ENCODE measurements at regions of chr19 and their contacts with region 1.

Region 1: DNA sequence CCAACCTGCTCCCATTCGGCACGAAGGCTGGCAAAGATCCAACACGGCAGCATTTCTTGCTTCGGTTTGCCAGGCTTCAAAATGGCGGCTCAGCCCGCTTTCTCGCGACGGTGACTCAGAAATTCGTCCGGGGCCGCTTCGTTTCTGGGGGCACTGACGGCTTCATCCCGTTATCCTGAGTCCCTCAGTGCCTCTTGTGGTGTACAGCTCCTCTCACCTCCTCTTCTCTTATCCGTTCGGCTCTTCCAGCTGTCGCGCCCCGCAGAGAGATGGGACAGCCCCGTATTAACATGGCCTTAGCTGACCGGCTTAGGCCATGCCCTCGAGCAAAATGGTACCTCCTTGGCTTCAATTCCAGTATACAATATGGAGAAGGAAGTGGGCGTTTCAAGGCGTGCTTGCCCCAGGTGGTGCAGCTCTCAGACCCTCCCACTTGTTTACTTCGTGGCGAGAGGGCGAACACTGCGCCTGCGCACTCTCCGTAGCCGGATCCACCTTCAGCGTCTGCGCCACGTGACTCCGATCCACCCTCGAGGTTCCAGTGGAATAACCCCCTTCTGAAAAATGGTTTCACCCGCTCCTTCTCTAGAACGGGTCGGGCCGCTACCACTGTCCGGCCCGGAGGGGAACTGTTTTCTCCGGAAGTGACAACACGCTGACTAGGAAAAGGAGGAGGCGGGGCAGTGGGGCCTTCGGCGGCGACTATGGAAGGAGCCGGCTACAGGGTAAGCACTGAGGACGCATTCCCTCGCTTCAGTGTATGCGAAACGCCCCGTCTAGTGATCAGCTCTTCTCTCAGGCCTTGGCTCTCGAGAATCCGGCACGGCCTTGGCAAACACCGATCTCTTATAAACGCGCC is at the starts of genes AKT1S1 and TBC1D17:
- DNase-seq: peak; percentile 100
- H3K4me3 ChIP-seq: peak within 1 kb of the TSS; percentile 61 to 100 (median 91)
- H3K27ac ChIP-seq: peak within 1 kb of the TSS; percentile 92 to 100 (median 96)
- H3K4me1 ChIP-seq: peaks cover 0 to 33% (median 29%) of the 10 kb centered on the region in 4 donors
- H3K27me3 ChIP-seq: no peaks in the 10 kb centered on the region
- CTCF ChIP-seq: no peak
- EP300 ChIP-seq: peak in 2 of 4 donors; percentile 27 to 61
- POLR2A ChIP-seq: peak; percentile 76 to 92
- total RNA-seq, gene AKT1S1: 13.6 to 16.1 (median 14.6) TPM
- total RNA-seq, gene TBC1D17: 25.0 to 41.0 (median 26.6) TPM

Region 2: GRCh38 chr19:49451430-49452181 is 425.6 kb before region 1 on chr19 and contains the start of gene PIH1D1:
- intact Hi-C with region 1: loop called (anchors 5 kb)
- DNase-seq: peak; percentile 99
- H3K4me3 ChIP-seq: peak within 1 kb of the TSS; percentile 54 to 71 (median 60)
- H3K27ac ChIP-seq: peak within 1 kb of the TSS; percentile 96 to 99 (median 97)
- H3K4me1 ChIP-seq: peaks cover 0 to 46% (median 17%) of the 10 kb centered on the region in 4 donors
- H3K27me3 ChIP-seq: no peaks in the 10 kb centered on the region
- CTCF ChIP-seq: no peak
- EP300 ChIP-seq: peak in 1 of 4 donors; percentile 27
- POLR2A ChIP-seq: no peak
- total RNA-seq, gene PIH1D1: 62.9 to 99.6 (median 81.4) TPM

Region 3: GRCh38 chr19:49497047-49497788 is 380.0 kb before region 1 on chr19:
- intact Hi-C with region 1: loop called (anchors 5 kb)
- DNase-seq: peak; percentile 81
- H3K4me3 ChIP-seq: peak overlapping the region; percentile 70 to 95 (median 85)
- H3K27ac ChIP-seq: peak overlapping the region; percentile 88 to 96 (median 94)
- H3K4me1 ChIP-seq: peaks cover 0 to 46% (median 34%) of the 10 kb centered on the region in 4 donors
- H3K27me3 ChIP-seq: no peaks in the 10 kb centered on the region
- CTCF ChIP-seq: no peak
- EP300 ChIP-seq: no peak
- POLR2A ChIP-seq: no peak

Region 4: GRCh38 chr19:49676690-49677231 is 200.5 kb before region 1 on chr19:
- intact Hi-C with region 1: loop called (anchors 2 kb)
- DNase-seq: peak; percentile 100
- H3K4me3 ChIP-seq: peak overlapping the region; percentile 71 to 96 (median 94)
- H3K27ac ChIP-seq: peak overlapping the region; percentile 92 to 95 (median 94)
- H3K4me1 ChIP-seq: peaks cover 0 to 54% (median 51%) of the 10 kb centered on the region in 4 donors
- H3K27me3 ChIP-seq: no peaks in the 10 kb centered on the region
- CTCF ChIP-seq: no peak
- EP300 ChIP-seq: no peak
- POLR2A ChIP-seq: no peak

Region 5: GRCh38 chr19:49755956-49756355 is 121.3 kb before region 1 on chr19:
- intact Hi-C with region 1: no loop called
- DNase-seq: no peak
- H3K4me3 ChIP-seq: no peak overlapping the region
- H3K27ac ChIP-seq: no peak overlapping the region
- H3K4me1 ChIP-seq: no peaks in the 10 kb centered on the region
- H3K27me3 ChIP-seq: no peaks in the 10 kb centered on the region
- CTCF ChIP-seq: no peak
- EP300 ChIP-seq: no peak
- POLR2A ChIP-seq: no peak

Region 6: GRCh38 chr19:49766007-49766937 is 111.0 kb before region 1 on chr19:
- intact Hi-C with region 1: loop called (anchors 2 kb)
- DNase-seq: peak; percentile 100
- H3K4me3 ChIP-seq: peak overlapping the region; percentile 14 to 96 (median 92)
- H3K27ac ChIP-seq: peak overlapping the region; percentile 91 to 96 (median 92)
- H3K4me1 ChIP-seq: peaks cover 0 to 36% (median 27%) of the 10 kb centered on the region in 4 donors
- H3K27me3 ChIP-seq: no peaks in the 10 kb centered on the region
- CTCF ChIP-seq: no peak
- EP300 ChIP-seq: no peak
- POLR2A ChIP-seq: peak; percentile 36 to 39

Region 7: DNA sequence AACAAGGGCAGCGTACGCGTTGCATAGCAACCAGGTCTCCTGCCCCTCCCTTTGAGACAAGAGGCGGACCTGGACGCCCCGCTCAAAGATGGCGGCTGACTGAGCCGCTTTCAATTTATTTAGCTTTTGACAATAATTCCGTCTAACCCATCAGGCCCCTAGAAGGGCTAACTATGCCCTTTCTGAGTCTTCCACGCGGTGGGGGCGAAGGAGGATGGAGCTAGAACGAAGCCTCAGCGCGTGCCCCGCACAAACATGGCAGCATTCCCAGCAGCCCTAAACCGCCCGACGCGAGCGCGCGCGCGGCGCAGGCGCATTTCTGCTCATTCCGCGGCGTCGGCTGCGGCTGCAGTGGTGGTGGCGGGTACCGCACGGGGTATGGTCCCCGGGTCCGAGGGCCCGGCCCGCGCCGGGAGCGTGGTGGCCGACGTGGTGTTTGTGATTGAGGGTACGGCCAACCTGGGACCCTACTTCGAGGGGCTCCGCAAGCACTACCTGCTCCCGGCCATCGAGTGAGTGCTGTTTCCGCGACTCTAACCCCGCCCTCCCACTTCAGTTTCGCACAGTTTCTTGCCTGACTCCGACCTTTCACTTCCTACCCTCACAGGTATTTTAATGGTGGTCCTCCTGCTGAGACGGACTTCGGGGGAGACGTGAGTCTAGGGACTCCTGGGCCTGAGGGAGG is 59.1 kb before region 1 on chr19 and contains the start of gene MED25:
- intact Hi-C with region 1: loop called (anchors 1 kb)
- DNase-seq: peak; percentile 91
- H3K4me3 ChIP-seq: peak within 1 kb of the TSS; percentile 77 to 94 (median 82)
- H3K27ac ChIP-seq: peak within 1 kb of the TSS; percentile 96 to 98 (median 96)
- H3K4me1 ChIP-seq: peaks cover 0 to 35% (median 30%) of the 10 kb centered on the region in 4 donors
- H3K27me3 ChIP-seq: no peaks in the 10 kb centered on the region
- CTCF ChIP-seq: peak; percentile 34 to 73 (median 51)
- EP300 ChIP-seq: no peak
- POLR2A ChIP-seq: peak; percentile 68 to 76
- total RNA-seq, gene MED25: 17.8 to 45.4 (median 22.4) TPM

Region 8: DNA sequence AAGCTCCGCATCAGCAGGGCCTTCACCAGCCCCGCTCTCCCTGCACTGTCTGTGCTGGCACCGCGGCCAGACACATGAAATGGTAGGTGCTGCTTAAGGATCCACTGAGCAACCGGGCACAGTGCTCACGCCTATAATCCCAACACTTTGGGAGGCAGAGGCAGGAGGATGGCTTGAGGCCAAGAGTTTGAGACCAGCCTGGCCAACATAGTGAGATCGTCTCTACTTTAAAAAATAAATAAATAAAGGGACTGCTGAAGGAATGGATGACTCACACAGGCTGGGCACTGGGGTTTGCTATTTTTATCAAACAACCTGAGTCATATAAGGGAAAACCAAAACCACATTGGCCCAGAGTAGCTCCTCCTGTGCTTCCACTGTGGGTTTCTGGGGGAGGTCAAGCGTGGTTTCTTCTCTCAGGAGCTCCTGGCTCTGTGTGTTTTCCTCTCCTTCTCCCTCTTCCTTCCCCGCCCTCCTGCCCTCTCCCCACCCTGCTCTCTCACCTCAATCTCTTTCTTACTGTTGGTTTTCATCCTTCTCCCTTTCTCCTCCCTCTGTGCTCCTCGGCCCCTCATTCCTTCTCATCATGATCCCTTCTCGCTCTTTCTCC is 126.7 kb after region 1 on chr19:
- intact Hi-C with region 1: no loop called
- DNase-seq: peak; percentile 83
- H3K4me3 ChIP-seq: no peak overlapping the region
- H3K27ac ChIP-seq: peak overlapping the region; percentile 79 to 85 (median 80)
- H3K4me1 ChIP-seq: peaks cover 0 to 36% (median 24%) of the 10 kb centered on the region in 4 donors
- H3K27me3 ChIP-seq: no peaks in the 10 kb centered on the region
- CTCF ChIP-seq: no peak
- EP300 ChIP-seq: no peak
- POLR2A ChIP-seq: no peak